HepG2 (cell line): ENCODE measurements at regions of chr6 and their contacts with region 1.

Region 1: GRCh38 chr6:52389626-52390360 is 27.8 kb downstream of the PAQR8 start:
- DNase-seq: peak; percentile 94
- ATAC-seq: peak; percentile 94
- H3K4me3 ChIP-seq: peak overlapping the region; percentile 11 to 56 (median 30)
- H3K27ac ChIP-seq: peak overlapping the region; percentile 84
- H3K4me1 ChIP-seq: peaks cover 53% of the 10 kb centered on the region
- H3K27me3 ChIP-seq: no peaks in the 10 kb centered on the region
- CTCF ChIP-seq: peak; percentile 42
- EP300 ChIP-seq: peak in 1 of 2 experiments; percentile 68; a peak in 2 of 4 replicates
- POLR2A ChIP-seq: peak in 1 of 2 experiments; percentile 34; a peak in 2 of 4 replicates
- RAD21 ChIP-seq: no peak

Region 2: GRCh38 chr6:52352239-52353008 is 37.4 kb before region 1 on chr6:
- CTCF ChIA-PET with region 1: no interaction called
- POLR2A ChIA-PET with region 1: interaction called, 16 read pairs
- in situ Hi-C with region 1: no loop called
- intact Hi-C with region 1: loop called (anchors 5 kb)
- DNase-seq: peak; percentile 98
- ATAC-seq: peak; percentile 97
- H3K4me3 ChIP-seq: peak overlapping the region in 2 of 3 experiments; percentile 12 to 22; a peak in 3 of 6 replicates
- H3K27ac ChIP-seq: peak overlapping the region; percentile 55
- H3K4me1 ChIP-seq: peaks cover 58% of the 10 kb centered on the region
- H3K27me3 ChIP-seq: no peaks in the 10 kb centered on the region
- CTCF ChIP-seq: no peak
- EP300 ChIP-seq: peak; percentile 14 to 71; a peak in 3 of 4 replicates
- POLR2A ChIP-seq: no peak
- RAD21 ChIP-seq: no peak

Region 3: GRCh38 chr6:52371656-52372191 is 18.1 kb before region 1 on chr6:
- CTCF ChIA-PET with region 1: no interaction called
- POLR2A ChIA-PET with region 1: interaction called, 14 read pairs
- in situ Hi-C with region 1: no loop called
- intact Hi-C with region 1: loop called (anchors 1 kb)
- DNase-seq: peak; percentile 81
- ATAC-seq: peak; percentile 82
- H3K4me3 ChIP-seq: no peak overlapping the region; a peak in 1 of 6 replicates
- H3K27ac ChIP-seq: peak overlapping the region; percentile 6
- H3K4me1 ChIP-seq: peaks cover 96% of the 10 kb centered on the region
- H3K27me3 ChIP-seq: no peaks in the 10 kb centered on the region
- CTCF ChIP-seq: peak; percentile 36; the same call in 1 of the 2 replicates
- EP300 ChIP-seq: peak; percentile 82 to 97; a peak in 3 of 4 replicates
- POLR2A ChIP-seq: no peak
- RAD21 ChIP-seq: no peak